Right ventricle myocardium inferior (tissue), 1 donor: ENCODE measurements at regions of chr12 and their contacts with region 1.

Region 1: GRCh38 chr12:97308576-97309198 is 153.9 kb upstream of the RMST start:
- DNase-seq: no peak
- ATAC-seq: no peak

Region 2: DNA sequence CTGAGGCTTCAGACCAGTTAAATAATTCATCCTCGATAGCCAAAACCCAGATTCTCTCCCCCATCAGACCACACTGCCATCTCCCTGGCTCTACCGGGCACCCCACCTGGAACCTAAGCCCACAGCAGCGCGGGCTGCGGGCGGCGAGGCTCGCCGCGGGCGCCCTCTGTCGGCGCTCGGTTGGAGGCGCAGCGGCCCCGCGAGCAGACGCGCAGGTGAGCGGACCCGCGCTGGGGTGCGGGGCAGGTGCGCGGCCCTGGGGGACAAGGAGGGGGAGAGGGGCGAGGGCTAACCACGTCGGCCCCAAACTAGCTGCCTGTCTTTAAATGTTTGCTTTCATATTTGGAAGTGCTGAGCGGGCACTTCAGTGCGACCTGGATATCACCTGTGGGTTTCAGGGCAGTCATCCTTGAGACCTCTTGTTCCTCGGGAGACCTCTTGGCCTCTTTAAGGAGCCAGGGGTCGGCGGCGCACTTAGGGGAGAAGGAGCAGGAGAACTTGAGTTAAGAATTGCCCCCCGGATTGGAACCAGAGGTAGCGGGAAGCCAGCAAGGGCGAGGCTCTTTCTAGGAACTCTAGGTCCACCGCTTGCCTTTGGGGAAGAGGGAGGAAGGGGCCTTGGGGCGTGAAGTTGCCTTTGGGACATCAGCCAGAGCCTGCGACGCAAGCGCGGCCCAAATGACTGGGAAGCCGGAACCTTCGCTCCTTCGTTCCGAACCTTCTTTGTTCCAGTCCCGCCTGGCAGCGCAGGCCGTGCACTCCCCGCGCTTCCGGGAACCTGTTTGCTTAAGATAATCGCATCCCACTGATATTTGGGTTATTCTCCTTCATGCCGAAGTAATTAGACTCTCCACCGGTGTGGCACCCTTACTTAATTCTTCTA is 323.0 kb before region 1 on chr12:
- intact Hi-C with region 1: loop called (anchors 10 kb)
- DNase-seq: peak; percentile 70
- ATAC-seq: no peak

Region 3: GRCh38 chr12:97426492-97427116 is 117.9 kb after region 1 on chr12:
- intact Hi-C with region 1: no loop called
- DNase-seq: no peak
- ATAC-seq: peak; percentile 85